Posterior cingulate gyrus (tissue), 11 donors: ENCODE measurements at regions of chr14 and their contacts with region 1.

Region 1: DNA sequence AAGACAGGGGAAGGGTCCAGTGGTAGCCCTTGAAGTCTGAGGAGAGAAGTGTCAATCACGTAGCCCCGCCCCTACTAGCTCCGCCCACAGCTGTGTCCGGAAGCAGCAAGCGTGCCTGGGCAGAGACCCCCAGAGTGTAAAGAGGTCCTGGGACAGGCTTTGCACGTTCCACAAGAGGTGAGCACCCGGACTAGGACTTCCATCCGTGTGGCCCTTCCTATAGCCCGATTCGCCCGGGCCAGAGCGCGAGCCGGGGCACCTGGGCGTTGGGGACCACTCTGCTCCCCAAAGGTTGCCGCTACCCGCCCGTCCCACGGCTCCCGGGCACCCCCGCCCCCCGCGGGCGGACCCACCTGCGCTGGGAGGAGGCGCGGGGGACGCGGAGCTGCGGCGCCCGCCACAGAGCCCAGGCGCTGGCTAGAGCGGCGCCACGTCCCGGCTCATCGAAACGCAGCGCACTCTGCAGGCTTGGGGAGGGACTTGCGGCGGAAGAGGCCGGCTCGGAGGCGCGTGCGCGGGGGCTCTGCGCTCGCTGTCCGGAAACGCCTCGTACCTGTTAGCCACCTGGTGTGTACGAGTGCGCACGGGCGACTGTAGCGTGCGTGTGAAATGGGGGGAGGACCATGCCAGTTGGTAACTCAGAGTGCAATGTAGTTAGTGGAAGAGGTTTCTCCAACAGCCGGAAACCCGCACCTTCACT is at the start of gene RABGGTA:
- DNase-seq: peak; percentile 73 to 98 (median 84)

Region 2: DNA sequence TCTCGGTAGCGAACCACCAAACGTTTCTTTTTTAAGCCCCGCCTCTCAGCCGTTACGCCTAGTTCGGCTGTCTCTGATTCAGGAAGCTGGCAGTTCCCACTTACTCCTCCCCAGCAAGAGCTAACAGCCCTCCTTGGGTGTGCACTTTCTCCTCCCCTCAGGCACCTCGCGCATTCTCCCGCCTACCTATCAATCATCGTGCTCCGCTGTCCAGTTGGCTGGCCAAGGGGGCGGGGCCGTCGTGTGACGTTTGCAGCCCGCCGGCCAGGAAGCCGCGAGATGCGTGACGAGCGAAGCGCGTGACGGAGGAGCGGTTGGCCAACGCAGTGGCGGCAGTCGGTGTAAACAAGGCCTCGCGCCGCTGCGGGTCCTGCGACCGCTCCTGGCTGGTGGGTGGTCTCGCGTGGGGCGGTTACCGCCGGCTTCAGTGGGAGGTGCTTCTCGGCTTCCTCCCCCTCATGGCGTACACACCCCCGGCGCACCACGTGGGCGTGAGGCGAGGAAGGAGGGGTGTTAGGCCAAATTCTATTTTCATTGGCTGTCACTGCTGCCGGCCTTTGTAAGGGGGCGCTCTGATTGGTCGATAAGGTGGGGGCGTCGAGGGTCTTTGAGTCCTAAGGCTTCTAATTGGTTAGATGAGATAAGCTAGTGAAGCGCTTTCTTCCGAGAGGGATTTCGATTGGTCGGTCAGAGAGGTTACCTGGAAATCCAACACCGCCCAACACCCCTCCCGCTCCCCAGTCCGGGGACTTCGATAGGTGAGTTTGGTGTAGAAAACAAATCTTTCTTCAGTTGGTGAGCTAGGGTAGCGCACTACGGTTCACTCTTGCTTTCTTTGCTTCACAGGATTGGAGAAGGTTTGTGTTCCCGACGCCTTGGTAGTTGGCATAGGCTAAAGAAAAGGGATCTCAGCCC is 156.5 kb before region 1 on chr14 and contains the starts of genes DCAF11 and NRL:
- intact Hi-C with region 1: no loop called
- DNase-seq: peak; percentile 96 to 100 (median 97)

Region 3: GRCh38 chr14:24241829-24242443 is 29.3 kb before region 1 on chr14:
- intact Hi-C with region 1: loop called (anchors 2 kb)
- DNase-seq: peak in 8 of 10 donors; percentile 83 to 98 (median 90)

Region 4: DNA sequence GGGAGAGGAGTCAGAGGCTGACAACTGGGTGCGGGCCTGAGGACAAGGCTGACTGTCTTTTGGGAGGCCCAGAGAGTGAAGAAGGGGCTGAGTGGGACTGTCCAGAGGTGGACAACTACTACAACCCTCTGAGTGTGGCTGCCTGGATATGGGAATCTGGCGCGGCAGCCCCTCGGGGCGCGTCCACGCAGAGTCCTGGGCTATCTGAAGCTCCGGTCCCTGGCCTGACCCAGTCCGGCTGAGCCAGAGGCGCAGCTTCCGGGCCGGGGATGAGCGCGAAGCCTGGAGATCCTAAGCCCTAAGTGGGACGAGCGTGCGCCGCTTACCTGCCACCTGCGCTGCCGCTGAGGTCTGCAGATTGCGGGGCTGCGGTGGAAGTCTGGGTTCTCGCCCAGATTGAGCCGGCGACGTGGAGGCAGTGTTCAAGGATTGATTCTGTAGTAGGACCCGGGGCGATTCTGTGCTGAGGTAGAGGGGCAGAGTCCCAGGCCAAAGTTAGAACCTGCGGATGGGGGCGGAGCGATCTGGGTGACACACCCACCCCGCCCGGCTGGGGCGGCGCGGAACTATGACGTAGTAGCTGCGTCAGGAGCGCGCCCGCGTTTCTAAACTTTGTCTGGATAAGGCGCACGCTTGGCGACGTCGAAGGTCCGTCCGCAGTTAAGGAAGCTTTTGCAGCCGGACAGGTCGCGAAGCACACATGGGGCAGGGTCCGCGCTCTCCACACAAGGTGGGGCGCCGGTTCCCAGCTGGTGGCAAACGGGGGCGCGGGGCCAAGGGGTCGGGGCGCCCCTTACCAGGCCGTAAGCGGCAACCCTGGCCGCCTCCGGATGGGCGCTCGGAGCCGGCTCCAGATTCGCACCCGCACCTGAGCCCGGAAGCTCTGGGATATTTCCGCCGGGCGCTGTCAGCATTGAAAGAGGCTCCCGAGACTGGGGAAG is 28.2 kb after region 1 on chr14 and contains the starts of genes DHRS1 and NOP9:
- intact Hi-C with region 1: loop called (anchors 1 kb)
- DNase-seq: peak; percentile 85 to 99 (median 92)

Region 5: GRCh38 chr14:24465368-24465767 is 194.1 kb after region 1 on chr14:
- intact Hi-C with region 1: no loop called
- DNase-seq: no peak